PC-3 (cell line): ENCODE measurements at regions of chrX and their contacts with region 1.

Region 1: GRCh38 chrX:102899940-102900916 is 36.8 kb upstream of the RAB40AL start:
- DNase-seq: peak; percentile 90
- ATAC-seq: peak; percentile 92
- H3K4me3 ChIP-seq: no peak overlapping the region
- H3K27ac ChIP-seq: no peak overlapping the region
- H3K4me1 ChIP-seq: peaks cover 4% of the 10 kb centered on the region; the same call in 1 of the 2 replicates
- H3K27me3 ChIP-seq: no peaks in the 10 kb centered on the region
- CTCF ChIP-seq: peak; percentile 72

Region 2: GRCh38 chrX:102934624-102935023 is 34.4 kb after region 1 on chrX:
- CTCF ChIA-PET with region 1: interaction called, 7 read pairs
- POLR2A ChIA-PET with region 1: no interaction called
- intact Hi-C with region 1: loop called (anchors 5 kb)
- DNase-seq: peak; percentile 67
- ATAC-seq: no peak
- H3K4me3 ChIP-seq: no peak overlapping the region
- H3K27ac ChIP-seq: no peak overlapping the region
- H3K4me1 ChIP-seq: peaks cover 40% of the 10 kb centered on the region
- H3K27me3 ChIP-seq: no peaks in the 10 kb centered on the region
- CTCF ChIP-seq: peak; percentile 74

Region 3: DNA sequence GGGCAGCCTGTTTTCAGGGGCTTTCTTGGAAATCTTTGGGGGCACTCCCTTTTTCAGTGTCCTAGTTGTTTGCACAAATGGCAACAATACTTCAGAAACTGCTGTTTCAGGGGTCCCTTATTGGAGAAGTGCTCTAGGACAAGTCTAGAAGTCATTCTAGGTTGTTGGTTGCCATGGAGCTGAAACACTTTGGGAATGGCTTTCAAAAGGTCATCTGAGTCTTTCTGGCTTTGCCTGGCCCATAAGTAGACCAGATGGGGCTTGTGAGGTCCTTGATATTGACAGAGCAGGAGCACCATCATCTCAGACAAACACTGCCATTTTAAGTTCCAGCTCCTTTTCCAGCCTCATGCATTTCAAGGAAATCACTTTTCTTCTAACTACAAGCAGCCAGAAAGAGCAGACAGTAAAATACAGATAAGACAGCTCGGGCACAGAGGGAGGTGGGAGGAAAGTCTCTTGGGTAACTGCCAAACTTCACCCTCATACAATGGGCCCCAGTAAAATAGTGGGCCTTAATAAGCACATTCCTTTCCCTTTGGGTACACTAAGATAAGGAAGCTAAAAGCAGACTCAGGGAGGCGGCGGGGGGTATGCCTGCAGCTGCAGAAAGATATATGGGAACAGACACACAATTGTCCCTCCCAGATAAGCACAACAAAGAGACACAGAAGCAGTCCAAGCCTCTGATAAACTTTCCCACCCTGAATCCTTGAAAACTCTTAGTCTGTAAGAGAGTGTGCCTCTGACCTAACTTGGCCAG is 201.2 kb after region 1 on chrX:
- CTCF ChIA-PET with region 1: no interaction called
- POLR2A ChIA-PET with region 1: no interaction called
- intact Hi-C with region 1: no loop called
- DNase-seq: no peak
- ATAC-seq: no peak
- H3K4me3 ChIP-seq: no peak overlapping the region
- H3K27ac ChIP-seq: no peak overlapping the region
- H3K4me1 ChIP-seq: no peaks in the 10 kb centered on the region
- H3K27me3 ChIP-seq: no peaks in the 10 kb centered on the region
- CTCF ChIP-seq: no peak